ENCODE measurements at regions of chr4 and their contacts with region 1.

Region 1: DNA sequence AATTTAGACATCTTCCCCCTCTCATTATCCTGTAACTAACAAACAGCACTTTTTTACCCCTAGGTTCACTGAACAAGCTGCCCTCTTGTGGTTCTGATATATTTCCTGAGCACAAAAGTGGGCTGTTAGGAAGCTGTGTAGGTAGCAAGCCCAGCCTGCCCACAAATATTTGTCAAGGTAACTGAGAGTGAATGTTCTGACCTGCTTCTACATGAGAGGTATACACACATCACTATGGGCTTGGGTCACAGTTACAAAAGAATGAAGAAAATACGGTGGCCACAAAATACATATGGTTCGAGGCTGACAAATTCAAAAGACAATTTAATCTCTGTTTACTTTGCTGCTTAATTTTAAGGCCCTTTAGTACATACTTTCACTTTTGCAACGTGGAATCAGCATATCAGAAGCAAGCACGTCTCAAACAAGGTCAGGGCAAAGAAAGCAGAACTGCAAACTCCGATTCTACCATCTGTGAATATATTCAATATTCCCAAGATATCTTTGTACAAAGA is 78.7 kb downstream of the RBM47 start:
- DNase-seq: peak; percentile 78
- H3K4me3 ChIP-seq: peak overlapping the region in 2 of 3 experiments; percentile 5 to 22
- H3K27ac ChIP-seq: peak overlapping the region; percentile 53
- H3K4me1 ChIP-seq: peaks cover 5% of the 10 kb centered on the region
- H3K27me3 ChIP-seq: no peaks in the 10 kb centered on the region
- CTCF ChIP-seq: peak; percentile 39 to 54

Region 2: DNA sequence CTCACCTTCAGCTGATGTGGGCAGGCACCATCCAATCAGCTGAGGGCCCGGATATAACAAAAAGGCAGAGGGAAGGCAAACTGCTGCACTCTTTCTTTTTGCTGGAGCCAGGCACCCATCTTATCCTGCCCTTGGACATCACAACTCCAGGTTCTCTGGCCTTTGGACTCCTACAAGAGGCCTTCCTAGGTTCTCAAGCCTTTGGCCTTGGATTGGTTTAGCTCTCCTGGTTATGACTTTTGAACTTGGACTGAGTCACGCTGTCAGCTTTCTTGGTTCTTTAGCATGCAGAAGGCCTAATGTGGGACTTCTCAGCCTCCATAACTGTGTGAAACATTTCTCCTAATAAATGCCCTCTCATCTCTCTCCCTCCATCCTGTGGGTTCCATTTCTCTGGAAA is 517.4 kb before region 1 on chr4:
- CTCF ChIA-PET with region 1: no interaction called
- dilution Hi-C with region 1: no loop called
- in situ Hi-C with region 1: no loop called
- intact Hi-C with region 1: no loop called
- DNase-seq: no peak
- H3K4me3 ChIP-seq: no peak overlapping the region
- H3K27ac ChIP-seq: no peak overlapping the region
- H3K4me1 ChIP-seq: peaks cover 2% of the 10 kb centered on the region
- H3K27me3 ChIP-seq: no peaks in the 10 kb centered on the region
- CTCF ChIP-seq: no peak

Region 3: GRCh38 chr4:40462326-40462725 is 88.7 kb before region 1 on chr4:
- CTCF ChIA-PET with region 1: no interaction called
- dilution Hi-C with region 1: no loop called
- in situ Hi-C with region 1: no loop called
- intact Hi-C with region 1: no loop called
- DNase-seq: no peak
- H3K4me3 ChIP-seq: no peak overlapping the region
- H3K27ac ChIP-seq: no peak overlapping the region
- H3K4me1 ChIP-seq: no peaks in the 10 kb centered on the region
- H3K27me3 ChIP-seq: no peaks in the 10 kb centered on the region
- CTCF ChIP-seq: no peak

Region 4: GRCh38 chr4:40579983-40580382 is 29.0 kb after region 1 on chr4:
- CTCF ChIA-PET with region 1: no interaction called
- dilution Hi-C with region 1: no loop called
- in situ Hi-C with region 1: no loop called
- intact Hi-C with region 1: loop called (anchors 1 kb)
- DNase-seq: peak; percentile 54
- H3K4me3 ChIP-seq: no peak overlapping the region
- H3K27ac ChIP-seq: no peak overlapping the region
- H3K4me1 ChIP-seq: peaks cover 10% of the 10 kb centered on the region
- H3K27me3 ChIP-seq: no peaks in the 10 kb centered on the region
- CTCF ChIP-seq: no peak

Region 5: DNA sequence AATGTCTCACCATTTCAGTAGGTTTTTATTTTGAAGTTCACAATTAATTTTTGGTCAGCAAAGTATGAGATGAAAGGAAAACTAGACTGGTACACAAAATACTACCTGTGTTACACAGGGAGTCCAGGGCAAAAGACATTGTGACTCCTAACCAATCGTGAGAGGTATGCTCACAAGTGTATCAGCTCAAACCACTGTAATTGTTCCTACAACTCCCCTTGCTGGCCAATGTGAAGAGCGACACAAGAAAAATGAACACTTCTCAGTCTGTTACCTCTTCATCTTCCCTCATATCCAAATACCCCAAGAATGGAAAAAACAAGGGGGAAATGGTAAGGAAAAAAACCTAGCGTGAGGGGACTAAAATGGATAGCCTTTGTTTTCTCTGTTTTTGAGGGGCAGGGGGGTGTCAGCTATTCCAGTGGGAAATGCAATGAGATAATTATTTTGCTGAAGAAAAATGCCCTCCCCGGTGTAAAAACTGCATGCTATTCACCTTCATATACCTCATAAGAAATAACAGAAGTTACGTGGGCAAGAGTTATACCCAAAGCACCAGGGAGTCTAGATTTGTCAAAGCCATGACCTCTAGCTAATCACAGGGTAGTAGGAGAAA is 168.1 kb after region 1 on chr4:
- CTCF ChIA-PET with region 1: no interaction called
- dilution Hi-C with region 1: no loop called
- in situ Hi-C with region 1: no loop called
- intact Hi-C with region 1: loop called (anchors 2 kb)
- DNase-seq: peak; percentile 34
- H3K4me3 ChIP-seq: no peak overlapping the region
- H3K27ac ChIP-seq: no peak overlapping the region
- H3K4me1 ChIP-seq: no peaks in the 10 kb centered on the region
- H3K27me3 ChIP-seq: no peaks in the 10 kb centered on the region
- CTCF ChIP-seq: peak; percentile 39 to 67

Measured in mammary epithelial cell (primary cell).